ENCODE measurements at regions of chr2 and their contacts with region 1.

Region 1: DNA sequence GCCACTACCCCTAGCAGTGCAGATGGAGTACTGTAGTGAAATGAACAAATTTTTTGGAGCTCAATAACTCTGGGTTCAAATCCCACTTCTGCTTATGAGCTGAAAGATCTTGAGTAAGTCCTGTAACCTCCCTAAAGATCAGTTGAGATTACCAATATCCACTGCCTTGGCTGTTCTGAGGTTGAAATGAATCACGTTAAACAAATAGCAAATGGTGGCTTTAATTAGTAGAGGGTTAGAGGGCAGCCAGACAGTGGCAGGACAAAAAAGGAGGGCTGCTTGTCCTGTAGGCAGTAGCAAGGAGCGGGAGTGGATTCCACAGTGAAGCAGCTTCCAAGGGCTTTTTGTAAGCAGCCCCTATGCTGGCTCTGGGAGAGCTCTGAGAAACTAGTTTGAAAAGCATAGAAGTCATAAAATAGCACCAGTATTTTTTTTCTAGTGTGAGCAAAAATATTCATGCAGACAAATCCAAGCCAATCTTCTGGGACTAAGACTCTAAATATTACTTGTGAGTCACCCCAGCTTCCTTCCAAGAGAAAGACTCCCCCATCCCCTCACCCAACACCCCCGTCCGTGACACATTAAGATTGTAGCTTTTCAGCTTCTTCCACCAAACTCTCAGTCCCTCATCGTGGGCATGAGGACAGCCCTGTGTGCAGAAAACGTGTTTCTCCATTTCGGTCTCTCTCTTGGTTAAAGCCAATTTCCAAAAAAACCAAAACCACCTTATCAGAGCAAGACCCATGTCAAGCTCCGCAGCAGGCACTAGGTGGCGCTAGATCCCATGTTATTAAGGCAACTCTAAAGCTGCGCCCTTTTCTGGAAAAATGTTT is 123.5 kb upstream of the LGALSL start:
- DNase-seq: peak; percentile 84
- H3K4me3 Mint-ChIP-seq: peak overlapping the region; percentile 41
- H3K27ac Mint-ChIP-seq: peak overlapping the region; percentile 66
- H3K4me1 Mint-ChIP-seq: peaks cover 58% of the 10 kb centered on the region
- H3K27me3 Mint-ChIP-seq: peaks cover 40% of the 10 kb centered on the region

Region 2: GRCh38 chr2:64021641-64022042 is 308.9 kb before region 1 on chr2:
- CTCF ChIA-PET with region 1: interaction called, 10 read pairs
- DNase-seq: no peak
- H3K4me3 Mint-ChIP-seq: peak overlapping the region; percentile 61
- H3K27ac Mint-ChIP-seq: peak overlapping the region; percentile 89
- H3K4me1 Mint-ChIP-seq: peaks cover 58% of the 10 kb centered on the region
- H3K27me3 Mint-ChIP-seq: no peaks in the 10 kb centered on the region

Region 3: GRCh38 chr2:64141674-64142405 is 188.7 kb before region 1 on chr2:
- CTCF ChIA-PET with region 1: interaction called, 11 read pairs
- DNase-seq: no peak
- H3K4me3 Mint-ChIP-seq: peak overlapping the region; percentile 87
- H3K27ac Mint-ChIP-seq: peak overlapping the region; percentile 97
- H3K4me1 Mint-ChIP-seq: peaks cover 44% of the 10 kb centered on the region
- H3K27me3 Mint-ChIP-seq: no peaks in the 10 kb centered on the region

Region 4: DNA sequence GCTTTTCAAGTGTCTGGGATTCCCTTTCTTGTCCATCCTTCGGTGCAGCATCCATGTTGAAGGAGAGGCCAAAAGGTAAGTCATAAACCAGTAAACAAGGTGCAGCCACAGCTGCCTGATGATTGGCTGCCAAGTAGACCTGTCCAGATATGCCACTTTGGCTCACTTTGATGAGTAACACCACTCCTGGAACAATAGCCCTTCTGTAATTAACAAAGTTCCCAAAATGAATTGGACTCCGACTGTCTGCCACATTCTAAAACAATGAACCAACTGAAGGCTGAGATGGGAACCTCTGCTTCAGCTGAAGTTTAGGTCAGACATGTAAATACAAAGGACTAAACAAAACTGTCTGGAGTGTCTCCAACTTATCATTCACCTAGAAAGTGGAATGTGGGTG is 41.2 kb after region 1 on chr2:
- CTCF ChIA-PET with region 1: interaction called, 12 read pairs
- DNase-seq: no peak
- H3K4me3 Mint-ChIP-seq: no peak overlapping the region
- H3K27ac Mint-ChIP-seq: no peak overlapping the region
- H3K4me1 Mint-ChIP-seq: no peaks in the 10 kb centered on the region
- H3K27me3 Mint-ChIP-seq: peaks cover 18% of the 10 kb centered on the region

Region 5: DNA sequence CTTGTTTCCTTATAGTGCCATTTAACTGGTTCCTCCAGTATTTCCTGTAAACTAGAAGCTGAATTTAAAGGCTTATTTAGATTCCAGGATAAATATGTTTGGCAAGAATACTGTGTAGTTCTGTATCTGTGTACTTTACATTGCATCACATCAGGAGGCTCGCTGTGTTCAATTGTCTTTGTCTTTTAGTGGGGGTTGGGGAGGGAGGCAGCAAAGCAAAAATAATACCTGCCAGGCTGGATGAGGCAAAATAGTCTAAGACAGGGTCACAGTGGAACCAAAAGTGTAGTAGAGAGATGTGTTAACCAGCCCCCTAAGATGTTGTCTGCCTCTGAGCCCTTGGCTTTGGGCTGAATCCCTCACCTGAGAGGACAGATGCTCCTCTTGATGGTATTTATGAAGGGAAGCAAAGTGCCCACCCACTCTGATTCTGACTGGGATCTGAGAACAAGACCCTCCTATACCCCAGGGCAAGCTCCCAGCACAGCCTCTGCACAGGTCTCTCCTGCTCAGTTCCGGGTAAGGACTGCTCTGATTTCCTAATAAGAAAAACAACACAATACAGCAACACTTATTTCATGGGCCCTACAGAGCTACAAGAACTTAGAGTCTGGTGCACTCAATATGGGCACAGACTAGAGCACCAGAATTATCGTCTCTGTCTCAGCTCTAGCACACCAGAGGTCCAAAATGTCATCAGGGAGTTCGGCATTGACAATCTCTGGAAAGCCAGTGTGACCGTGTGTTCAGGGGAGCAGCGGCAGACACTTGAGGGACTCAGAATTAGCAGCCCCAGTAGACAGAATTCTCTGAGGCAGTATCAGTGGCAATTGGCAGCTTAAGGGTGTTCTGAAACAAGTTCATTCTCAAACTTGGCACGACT is 186.4 kb after region 1 on chr2:
- CTCF ChIA-PET with region 1: interaction called, 22 read pairs
- DNase-seq: no peak
- H3K4me3 Mint-ChIP-seq: no peak overlapping the region
- H3K27ac Mint-ChIP-seq: no peak overlapping the region
- H3K4me1 Mint-ChIP-seq: no peaks in the 10 kb centered on the region
- H3K27me3 Mint-ChIP-seq: peaks cover 31% of the 10 kb centered on the region

Measured in activated naive CD4-positive, alpha-beta T cell treated with anti-CD3 and anti-CD28 coated beads, Interleukin-2, amount 10 ng/mL, durations not matched to agents 7 days and 5 days (primary cell).